CD8-positive, alpha-beta memory T cell (primary cell): ENCODE measurements at regions of chr5 and their contacts with region 1.

Region 1: DNA sequence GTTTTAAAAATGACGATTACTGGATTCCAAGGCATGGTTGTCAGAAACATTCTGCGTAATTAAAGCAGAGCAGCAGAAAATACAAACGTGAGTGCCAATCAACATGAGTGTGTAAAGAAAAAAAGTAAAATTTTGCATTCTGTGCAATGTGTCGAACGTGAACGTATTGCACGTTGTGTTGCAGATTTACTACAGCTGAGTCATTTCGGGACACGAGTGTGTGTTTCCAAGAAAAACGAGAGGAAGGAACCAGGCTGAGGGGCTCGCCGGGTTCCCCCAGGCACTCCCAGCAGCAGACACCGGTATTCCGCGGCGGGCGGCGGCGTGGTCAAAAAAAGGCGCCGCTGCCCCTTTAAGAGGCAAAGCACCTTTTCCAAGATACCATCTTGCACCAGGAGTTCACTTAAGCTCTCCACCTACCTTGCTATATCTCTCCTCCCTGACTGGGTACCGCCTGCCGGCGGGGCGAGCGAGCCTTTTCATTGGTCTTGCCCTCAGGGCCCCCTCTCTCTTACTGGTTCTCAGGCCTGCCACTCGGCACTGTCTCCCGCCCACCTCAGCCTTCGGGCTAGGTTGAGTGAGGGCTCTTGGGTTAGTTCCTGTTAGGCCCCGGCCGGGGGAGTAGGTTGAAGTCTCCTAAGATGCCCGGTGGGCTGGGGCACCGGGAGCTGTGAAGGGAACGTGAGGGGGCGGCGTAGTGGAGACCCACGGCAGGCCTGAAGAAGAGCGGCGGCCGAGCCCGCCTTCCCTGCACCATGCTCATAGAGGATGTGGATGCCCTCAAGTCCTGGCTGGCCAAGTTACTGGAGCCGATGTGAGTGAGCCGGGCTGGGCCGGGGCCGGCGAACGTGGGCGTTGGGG is at the start of gene RBM27:
- DNase-seq: peak; percentile 91 to 99 (median 98)
- H3K4me3 ChIP-seq: peak within 1 kb of the TSS; percentile 83
- H3K4me3 Mint-ChIP-seq: no peak within 1 kb of the TSS
- H3K27ac ChIP-seq: peak within 1 kb of the TSS; percentile 74
- H3K27ac Mint-ChIP-seq: no peak within 1 kb of the TSS
- H3K4me1 ChIP-seq: peaks cover 27% of the 10 kb centered on the region
- H3K4me1 Mint-ChIP-seq: peaks cover 18 to 21% (median 18%) of the 10 kb centered on the region in 3 donors
- H3K27me3 ChIP-seq: no peaks in the 10 kb centered on the region
- H3K27me3 Mint-ChIP-seq: no peaks in the 10 kb centered on the region
- total RNA-seq, gene RBM27: 30.8 to 31.9 TPM

Region 2: GRCh38 chr5:146165460-146165859 is 37.8 kb before region 1 on chr5:
- CTCF ChIA-PET with region 1: no interaction called
- POLR2A ChIA-PET with region 1: no interaction called
- DNase-seq: no peak
- H3K4me3 ChIP-seq: no peak overlapping the region
- H3K4me3 Mint-ChIP-seq: no peak overlapping the region
- H3K27ac ChIP-seq: no peak overlapping the region
- H3K27ac Mint-ChIP-seq: peak overlapping the region in 2 of 8 donors; percentile 17 to 21
- H3K4me1 ChIP-seq: no peaks in the 10 kb centered on the region
- H3K4me1 Mint-ChIP-seq: peaks cover 0 to 7% (median 3%) of the 10 kb centered on the region in 3 donors
- H3K27me3 ChIP-seq: no peaks in the 10 kb centered on the region
- H3K27me3 Mint-ChIP-seq: no peaks in the 10 kb centered on the region

Region 3: DNA sequence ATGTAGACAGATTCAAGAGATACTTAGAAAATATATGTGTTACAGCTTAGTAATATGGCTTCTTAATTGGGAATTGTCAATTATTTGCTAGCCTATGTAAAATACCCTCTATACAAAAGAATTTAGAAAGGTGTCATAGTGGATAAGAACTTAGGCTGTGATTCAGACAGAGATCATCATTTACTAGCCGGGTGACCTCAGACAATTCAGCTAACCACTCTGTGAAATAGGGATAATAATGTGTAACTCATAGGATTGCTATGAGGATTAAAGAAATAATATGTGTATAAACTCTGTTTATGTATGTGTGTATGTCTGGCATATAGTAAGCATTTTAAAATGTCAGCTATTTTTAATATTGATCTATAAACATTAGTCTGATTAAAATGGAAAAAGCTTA is 14.9 kb before region 1 on chr5:
- CTCF ChIA-PET with region 1: interaction called, 5 read pairs
- POLR2A ChIA-PET with region 1: interaction called, 13 read pairs
- DNase-seq: no peak
- H3K4me3 ChIP-seq: no peak overlapping the region
- H3K4me3 Mint-ChIP-seq: peak overlapping the region in 1 of 7 donors; percentile 7
- H3K27ac ChIP-seq: no peak overlapping the region
- H3K27ac Mint-ChIP-seq: peak overlapping the region in 1 of 8 donors; percentile 24
- H3K4me1 ChIP-seq: no peaks in the 10 kb centered on the region
- H3K4me1 Mint-ChIP-seq: no peaks in the 10 kb centered on the region
- H3K27me3 ChIP-seq: no peaks in the 10 kb centered on the region
- H3K27me3 Mint-ChIP-seq: peaks cover 7 to 11% of the 10 kb centered on the region in 2 donors